ENCODE measurements at regions of chr7 and their contacts with region 1.

Region 1: GRCh38 chr7:111763221-111763801 is 201.0 kb upstream of the IMMP2L start:
- DNase-seq: no peak
- H3K4me3 ChIP-seq: no peak overlapping the region
- H3K27ac ChIP-seq: no peak overlapping the region
- H3K4me1 ChIP-seq: peaks cover 13% of the 10 kb centered on the region
- H3K27me3 ChIP-seq: no peaks in the 10 kb centered on the region
- CTCF ChIP-seq: peak; percentile 68

Region 2: DNA sequence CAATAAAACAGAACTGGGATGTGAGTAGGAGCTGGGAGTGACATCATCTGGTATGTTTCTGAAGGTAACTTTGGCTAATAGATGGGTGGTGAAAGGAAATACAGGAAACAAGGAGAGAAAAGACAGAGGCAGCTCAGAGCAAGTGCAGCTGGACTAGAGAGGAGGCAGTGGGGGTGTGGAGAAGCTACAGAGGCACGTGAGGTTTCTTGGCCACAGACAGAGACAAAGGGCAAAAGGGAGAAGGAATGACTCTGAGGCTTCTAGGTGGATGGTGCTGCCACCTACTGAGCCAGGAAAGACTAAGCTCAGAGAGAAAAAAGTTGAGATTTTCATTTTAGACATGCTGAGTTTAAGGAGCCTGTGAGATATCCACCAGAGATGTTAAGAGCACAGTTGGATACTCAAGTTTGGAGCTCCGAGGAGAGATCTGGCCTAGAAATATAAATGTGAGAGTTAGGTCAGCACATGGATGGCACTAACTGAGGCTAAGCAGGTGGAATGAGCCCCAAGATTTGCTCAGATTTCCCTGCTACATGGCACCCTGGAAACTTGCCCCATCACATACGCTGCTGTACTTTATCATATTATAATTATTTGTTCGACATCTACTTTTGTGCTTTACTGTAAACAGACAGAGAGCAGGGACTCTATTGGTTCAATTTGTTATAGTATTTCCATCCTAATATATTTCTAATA is 92.0 kb after region 1 on chr7:
- intact Hi-C with region 1: loop called (anchors 10 kb)
- DNase-seq: no peak
- H3K4me3 ChIP-seq: no peak overlapping the region
- H3K27ac ChIP-seq: no peak overlapping the region
- H3K4me1 ChIP-seq: peaks cover 12% of the 10 kb centered on the region
- H3K27me3 ChIP-seq: no peaks in the 10 kb centered on the region
- CTCF ChIP-seq: peak; percentile 60